PC-3 (cell line): ENCODE measurements at regions of chr10 and their contacts with region 1.

Region 1: DNA sequence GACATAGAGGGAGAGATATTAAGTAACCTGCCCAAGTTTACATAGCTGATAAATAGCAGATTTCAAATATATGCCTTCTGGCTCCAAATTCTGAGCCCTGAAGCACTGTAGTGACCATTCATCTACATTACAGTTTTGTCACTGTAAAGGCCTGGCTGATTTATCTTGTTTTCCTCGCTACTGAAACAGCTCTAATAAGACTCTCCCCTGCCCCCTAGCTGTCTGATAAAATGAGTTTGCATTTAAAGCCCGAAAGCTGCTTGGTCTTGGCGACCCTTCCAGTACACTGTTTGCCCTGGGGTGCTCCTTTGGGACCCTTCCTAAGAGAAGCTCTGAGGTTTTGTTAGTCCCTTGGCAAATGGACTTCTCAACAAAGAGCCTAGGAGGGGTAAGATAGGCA is 59.7 kb upstream of the RAB11FIP2 start:
- DNase-seq: peak; percentile 40
- ATAC-seq: peak; percentile 40; the same call in 1 of the 2 replicates
- H3K4me3 ChIP-seq: no peak overlapping the region
- H3K27ac ChIP-seq: no peak overlapping the region
- H3K4me1 ChIP-seq: no peaks in the 10 kb centered on the region
- H3K27me3 ChIP-seq: 0 out of 2 replicates have a peak, but pooled peaks cover 5% of the 10 kb centered on the region
- CTCF ChIP-seq: peak; percentile 59

Region 2: GRCh38 chr10:117929327-117930067 is 176.9 kb before region 1 on chr10:
- CTCF ChIA-PET with region 1: no interaction called
- POLR2A ChIA-PET with region 1: no interaction called
- intact Hi-C with region 1: loop called (anchors 1 kb)
- DNase-seq: no peak
- ATAC-seq: no peak
- H3K4me3 ChIP-seq: no peak overlapping the region
- H3K27ac ChIP-seq: no peak overlapping the region
- H3K4me1 ChIP-seq: no peaks in the 10 kb centered on the region
- H3K27me3 ChIP-seq: no peaks in the 10 kb centered on the region
- CTCF ChIP-seq: no peak

Region 3: DNA sequence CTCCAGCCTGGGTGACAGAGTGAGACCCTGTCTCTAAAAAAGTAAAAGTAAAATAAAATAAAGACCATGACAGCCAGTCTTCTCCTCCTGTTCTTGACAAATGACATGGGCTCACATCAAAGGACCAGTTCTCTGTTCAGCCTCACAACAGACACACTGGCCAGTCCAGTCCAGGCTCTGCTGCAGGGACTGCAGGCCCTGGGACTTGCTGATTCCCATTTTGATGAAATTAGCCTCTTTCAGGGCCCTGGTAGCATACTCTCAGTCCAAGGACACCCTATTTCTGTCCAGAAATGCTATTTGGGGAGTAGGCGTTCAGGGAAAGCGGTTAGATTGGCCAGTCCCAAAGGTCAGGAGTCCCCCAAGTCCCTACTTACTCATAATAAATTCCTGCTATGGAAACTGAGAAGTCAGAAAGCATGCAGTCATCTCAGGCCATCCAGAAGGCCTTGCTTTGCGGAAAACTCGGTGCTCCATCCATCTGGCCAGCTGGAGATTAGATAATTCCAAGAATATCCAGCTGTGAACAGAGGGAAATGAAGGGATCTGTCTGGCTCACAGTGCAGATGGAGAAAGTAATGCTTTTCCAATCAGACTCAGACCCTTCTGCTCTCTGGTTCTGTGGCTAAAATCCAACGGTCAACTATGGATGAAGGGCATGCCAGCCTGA is 134.1 kb before region 1 on chr10:
- CTCF ChIA-PET with region 1: no interaction called
- POLR2A ChIA-PET with region 1: no interaction called
- intact Hi-C with region 1: no loop called
- DNase-seq: no peak
- ATAC-seq: no peak
- H3K4me3 ChIP-seq: no peak overlapping the region
- H3K27ac ChIP-seq: no peak overlapping the region
- H3K4me1 ChIP-seq: no peaks in the 10 kb centered on the region
- H3K27me3 ChIP-seq: no peaks in the 10 kb centered on the region
- CTCF ChIP-seq: no peak

Region 4: DNA sequence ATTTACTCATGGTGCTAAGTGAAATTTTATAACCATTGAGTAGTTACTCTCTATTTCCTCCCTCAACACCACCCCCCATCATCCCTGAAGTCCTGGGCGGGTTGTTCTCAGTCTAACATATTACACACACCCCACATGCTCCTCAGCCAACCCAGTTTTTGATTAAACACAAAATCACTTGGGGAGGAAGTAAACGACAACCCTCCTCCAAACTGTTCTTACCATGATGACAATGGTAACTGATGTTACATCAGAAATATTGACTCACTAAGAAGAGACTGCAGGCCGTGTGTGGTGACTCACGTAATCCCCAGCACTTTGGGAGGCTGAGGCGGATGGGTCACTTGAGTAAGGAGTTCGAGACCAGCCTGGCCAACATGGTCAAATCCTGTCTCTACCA is 103.8 kb before region 1 on chr10:
- CTCF ChIA-PET with region 1: no interaction called
- POLR2A ChIA-PET with region 1: no interaction called
- intact Hi-C with region 1: no loop called
- DNase-seq: no peak
- ATAC-seq: no peak
- H3K4me3 ChIP-seq: no peak overlapping the region
- H3K27ac ChIP-seq: no peak overlapping the region
- H3K4me1 ChIP-seq: peaks cover 7% of the 10 kb centered on the region
- H3K27me3 ChIP-seq: no peaks in the 10 kb centered on the region
- CTCF ChIP-seq: no peak